Left cardiac atrium (tissue), 4 donors: ENCODE measurements at regions of chr3 and their contacts with region 1.

Region 1: GRCh38 chr3:7800006-7800780 is 701.4 kb upstream of the LMCD1 start:
- DNase-seq: no peak
- ATAC-seq: no peak

Region 2: GRCh38 chr3:7393944-7394605 is 406.1 kb before region 1 on chr3:
- intact Hi-C with region 1: no loop called
- DNase-seq: no peak
- ATAC-seq: no peak

Region 3: DNA sequence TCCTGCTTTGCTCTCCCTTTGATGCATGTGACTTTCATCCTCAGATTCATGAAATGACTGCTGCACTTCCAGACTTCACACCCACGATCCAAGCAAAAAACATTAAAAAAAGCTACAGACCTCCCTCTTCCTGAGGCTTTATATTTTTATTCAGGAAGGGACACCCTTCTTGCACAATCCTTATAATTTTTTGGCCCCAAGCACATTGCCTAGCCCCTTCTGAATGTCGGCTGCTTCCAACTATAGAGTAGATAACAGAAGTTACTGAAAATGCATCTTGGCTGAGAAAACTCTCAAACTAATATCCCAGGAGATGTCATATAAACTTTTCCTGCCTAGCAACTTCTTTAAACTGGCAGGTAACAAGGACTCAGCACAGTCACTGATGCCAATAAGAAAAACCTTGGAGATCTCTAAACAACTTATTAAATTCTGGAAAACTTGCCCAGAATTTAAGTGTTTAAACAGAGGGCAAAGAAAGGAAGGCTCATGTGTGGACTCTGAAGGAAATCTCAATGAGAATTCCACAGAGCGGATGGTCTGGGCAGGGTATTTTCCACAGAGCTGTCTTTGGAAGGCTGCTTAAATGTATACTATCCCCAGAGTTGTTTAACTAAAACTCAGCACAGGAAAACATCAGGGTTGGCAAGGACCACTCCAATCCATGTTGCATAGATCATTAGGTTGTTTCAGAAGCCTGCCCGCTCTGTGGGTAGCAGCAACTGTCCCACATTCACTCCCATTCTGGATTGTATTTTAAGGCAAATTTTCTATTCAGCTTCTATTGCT is 45.3 kb before region 1 on chr3:
- intact Hi-C with region 1: no loop called
- DNase-seq: no peak
- ATAC-seq: no peak

Region 4: GRCh38 chr3:8111069-8111798 is 311.0 kb after region 1 on chr3:
- intact Hi-C with region 1: loop called in 1 of 2 experiments (anchors 10 kb)
- DNase-seq: peak; percentile 42
- ATAC-seq: peak; percentile 95 to 98